ENCODE measurements at regions of chr2 and their contacts with region 1.

Region 1: GRCh38 chr2:203510941-203511305 is 24.2 kb downstream of the RAPH1 start:
- DNase-seq: no peak
- H3K4me3 Mint-ChIP-seq: peak overlapping the region; percentile 62
- H3K27ac Mint-ChIP-seq: peak overlapping the region; percentile 85
- H3K4me1 Mint-ChIP-seq: peaks cover 35% of the 10 kb centered on the region
- H3K27me3 Mint-ChIP-seq: no peaks in the 10 kb centered on the region
- CTCF ChIP-seq: no peak

Region 2: GRCh38 chr2:203527719-203528118 is 16.8 kb after region 1 on chr2:
- CTCF ChIA-PET with region 1: interaction called, 4 read pairs
- intact Hi-C with region 1: loop called (anchors 2 kb)
- DNase-seq: no peak
- H3K4me3 Mint-ChIP-seq: peak overlapping the region; percentile 48
- H3K27ac Mint-ChIP-seq: peak overlapping the region; percentile 67
- H3K4me1 Mint-ChIP-seq: peaks cover 76% of the 10 kb centered on the region
- H3K27me3 Mint-ChIP-seq: no peaks in the 10 kb centered on the region
- CTCF ChIP-seq: no peak

Region 3: GRCh38 chr2:203873921-203874631 is 363.2 kb after region 1 on chr2:
- CTCF ChIA-PET with region 1: no interaction called
- intact Hi-C with region 1: no loop called
- DNase-seq: no peak
- H3K4me3 Mint-ChIP-seq: no peak overlapping the region
- H3K27ac Mint-ChIP-seq: no peak overlapping the region
- H3K4me1 Mint-ChIP-seq: no peaks in the 10 kb centered on the region
- H3K27me3 Mint-ChIP-seq: peaks cover 39% of the 10 kb centered on the region
- CTCF ChIP-seq: no peak